ENCODE measurements at regions of chr10 and their contacts with region 1.

Region 1: DNA sequence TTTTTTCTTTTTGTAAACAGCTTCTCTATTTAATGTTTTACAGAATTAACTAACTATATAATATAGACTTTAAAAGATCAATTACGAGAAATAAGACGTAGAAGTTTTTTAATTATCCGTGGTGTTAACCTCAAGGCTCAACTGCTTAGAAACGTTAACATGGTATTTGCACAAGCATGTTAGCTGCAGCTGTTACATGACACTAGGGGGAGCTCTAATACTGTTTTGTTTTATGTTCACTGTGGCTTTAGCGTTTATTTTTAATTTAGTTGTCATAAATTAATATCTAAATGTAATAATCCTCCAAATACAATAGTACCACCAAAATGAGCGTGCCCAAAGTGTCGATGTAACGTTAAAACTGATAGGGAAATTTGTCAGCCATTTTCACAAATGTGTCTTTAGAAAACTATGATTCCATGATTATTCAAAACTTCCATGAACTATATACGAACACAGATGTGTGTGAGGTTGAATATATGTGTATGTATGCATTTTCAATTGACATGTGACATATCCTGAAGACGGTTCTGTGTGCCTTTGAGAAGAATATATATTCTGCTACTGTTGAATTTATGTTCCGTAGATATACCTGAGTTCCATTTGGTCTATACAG is 828.8 kb upstream of the MBL2 start:
- DNase-seq: peak; percentile 53
- H3K4me3 Mint-ChIP-seq: no peak overlapping the region
- H3K27ac Mint-ChIP-seq: peak overlapping the region; percentile 23
- H3K4me1 Mint-ChIP-seq: peaks cover 9% of the 10 kb centered on the region
- H3K27me3 Mint-ChIP-seq: no peaks in the 10 kb centered on the region
- CTCF ChIP-seq: peak; percentile 74

Region 2: DNA sequence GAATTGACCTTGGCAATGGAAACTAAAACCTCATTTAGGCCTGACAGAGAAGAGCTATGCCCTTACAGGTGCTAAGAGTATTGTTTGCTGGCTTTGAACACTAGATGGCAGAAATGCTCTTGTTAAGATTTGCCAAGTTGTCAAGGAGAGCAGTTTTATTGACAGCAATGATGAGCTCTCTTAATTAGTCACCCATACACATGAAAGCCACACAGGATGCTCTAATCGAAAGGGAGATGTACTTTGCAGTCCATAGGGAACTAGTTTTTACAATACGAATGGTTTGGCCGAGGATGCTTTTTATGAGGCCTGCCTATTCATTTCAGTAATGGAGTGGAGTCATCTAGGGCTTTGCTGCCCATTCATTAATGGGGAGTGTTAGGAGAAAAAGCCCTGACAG is 783.3 kb before region 1 on chr10:
- CTCF ChIA-PET with region 1: interaction called, 9 read pairs
- POLR2A ChIA-PET with region 1: interaction called, 3 read pairs
- intact Hi-C with region 1: loop called (anchors 5 kb)
- DNase-seq: peak; percentile 80
- H3K4me3 Mint-ChIP-seq: no peak overlapping the region
- H3K27ac Mint-ChIP-seq: no peak overlapping the region
- H3K4me1 Mint-ChIP-seq: peaks cover 6% of the 10 kb centered on the region
- H3K27me3 Mint-ChIP-seq: no peaks in the 10 kb centered on the region
- CTCF ChIP-seq: peak; percentile 44

Region 3: DNA sequence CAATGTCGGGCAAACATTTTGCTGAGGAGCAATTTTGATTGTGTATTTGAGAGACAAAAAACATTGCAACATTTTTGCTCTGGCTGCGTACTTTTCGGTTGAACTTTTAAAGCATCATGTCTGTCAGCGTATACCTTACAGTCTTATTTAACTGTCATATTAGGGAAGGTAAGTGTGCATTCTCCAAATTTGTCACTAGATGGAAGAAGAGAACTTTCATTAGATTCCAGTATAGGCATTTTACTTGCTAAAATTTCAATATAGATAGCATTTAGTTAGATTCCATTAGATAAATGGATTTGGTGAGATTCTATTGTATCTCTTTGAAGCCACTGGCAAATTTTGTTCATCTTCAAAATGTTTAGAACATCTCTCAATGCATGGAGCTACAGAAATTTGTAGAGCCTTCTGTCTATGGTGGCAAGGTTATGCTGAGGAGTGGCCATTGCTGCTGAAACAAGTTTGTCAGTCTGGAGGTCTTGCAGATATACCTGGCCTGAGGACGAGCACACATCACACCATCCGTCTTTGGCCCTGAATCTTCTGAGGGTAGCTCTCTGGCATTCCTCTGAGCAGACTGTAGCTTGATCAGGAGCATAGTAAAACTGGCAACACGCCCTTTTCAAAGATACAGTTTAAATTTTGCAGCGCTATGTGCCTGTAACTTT is 391.3 kb before region 1 on chr10:
- CTCF ChIA-PET with region 1: interaction called, 20 read pairs
- POLR2A ChIA-PET with region 1: interaction called, 4 read pairs
- intact Hi-C with region 1: loop called (anchors 2 kb)
- DNase-seq: peak; percentile 49
- H3K4me3 Mint-ChIP-seq: no peak overlapping the region
- H3K27ac Mint-ChIP-seq: no peak overlapping the region
- H3K4me1 Mint-ChIP-seq: no peaks in the 10 kb centered on the region
- H3K27me3 Mint-ChIP-seq: no peaks in the 10 kb centered on the region
- CTCF ChIP-seq: peak; percentile 45

Region 4: GRCh38 chr10:53548664-53549063 is 52.7 kb before region 1 on chr10:
- CTCF ChIA-PET with region 1: no interaction called
- POLR2A ChIA-PET with region 1: no interaction called
- intact Hi-C with region 1: no loop called
- DNase-seq: no peak
- H3K4me3 Mint-ChIP-seq: no peak overlapping the region
- H3K27ac Mint-ChIP-seq: no peak overlapping the region
- H3K4me1 Mint-ChIP-seq: no peaks in the 10 kb centered on the region
- H3K27me3 Mint-ChIP-seq: no peaks in the 10 kb centered on the region
- CTCF ChIP-seq: no peak

Region 5: DNA sequence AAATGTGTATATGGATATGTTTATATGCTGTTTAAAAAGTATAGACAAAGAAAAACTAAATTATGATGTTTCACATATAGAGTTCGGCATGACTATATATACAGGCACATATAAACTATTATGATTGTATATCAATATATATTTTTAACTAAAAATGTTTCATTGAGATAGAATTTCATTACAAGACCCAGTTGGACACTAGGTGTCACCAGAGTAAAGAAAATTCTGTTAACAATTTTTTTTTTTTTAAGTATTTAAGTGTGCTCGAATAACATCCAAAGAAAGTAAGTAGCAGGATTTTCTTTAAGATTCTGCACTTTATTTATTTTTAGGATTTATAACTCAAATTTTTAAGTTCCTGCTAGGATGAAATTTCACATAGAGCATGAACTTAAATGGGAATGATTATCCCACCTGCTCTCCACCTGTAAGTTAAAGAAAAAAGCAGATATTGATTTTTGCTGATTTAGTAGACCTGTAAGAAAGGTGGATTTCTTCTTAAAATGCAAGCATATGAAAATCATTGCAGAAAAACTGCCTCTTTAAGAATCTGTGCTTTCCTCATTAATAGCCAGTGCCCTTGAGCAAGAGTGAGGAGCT is 238.2 kb after region 1 on chr10:
- CTCF ChIA-PET with region 1: interaction called, 3 read pairs
- POLR2A ChIA-PET with region 1: no interaction called
- intact Hi-C with region 1: loop called (anchors 5 kb)
- DNase-seq: peak; percentile 47
- H3K4me3 Mint-ChIP-seq: no peak overlapping the region
- H3K27ac Mint-ChIP-seq: no peak overlapping the region
- H3K4me1 Mint-ChIP-seq: peaks cover 24% of the 10 kb centered on the region
- H3K27me3 Mint-ChIP-seq: no peaks in the 10 kb centered on the region
- CTCF ChIP-seq: peak; percentile 60

Region 6: GRCh38 chr10:54133203-54133602 is 531.8 kb after region 1 on chr10:
- CTCF ChIA-PET with region 1: interaction called, 4 read pairs
- POLR2A ChIA-PET with region 1: interaction called, 3 read pairs
- intact Hi-C with region 1: loop called (anchors 5 kb)
- DNase-seq: no peak
- H3K4me3 Mint-ChIP-seq: no peak overlapping the region
- H3K27ac Mint-ChIP-seq: no peak overlapping the region
- H3K4me1 Mint-ChIP-seq: no peaks in the 10 kb centered on the region
- H3K27me3 Mint-ChIP-seq: no peaks in the 10 kb centered on the region
- CTCF ChIP-seq: peak; percentile 35

Region 7: DNA sequence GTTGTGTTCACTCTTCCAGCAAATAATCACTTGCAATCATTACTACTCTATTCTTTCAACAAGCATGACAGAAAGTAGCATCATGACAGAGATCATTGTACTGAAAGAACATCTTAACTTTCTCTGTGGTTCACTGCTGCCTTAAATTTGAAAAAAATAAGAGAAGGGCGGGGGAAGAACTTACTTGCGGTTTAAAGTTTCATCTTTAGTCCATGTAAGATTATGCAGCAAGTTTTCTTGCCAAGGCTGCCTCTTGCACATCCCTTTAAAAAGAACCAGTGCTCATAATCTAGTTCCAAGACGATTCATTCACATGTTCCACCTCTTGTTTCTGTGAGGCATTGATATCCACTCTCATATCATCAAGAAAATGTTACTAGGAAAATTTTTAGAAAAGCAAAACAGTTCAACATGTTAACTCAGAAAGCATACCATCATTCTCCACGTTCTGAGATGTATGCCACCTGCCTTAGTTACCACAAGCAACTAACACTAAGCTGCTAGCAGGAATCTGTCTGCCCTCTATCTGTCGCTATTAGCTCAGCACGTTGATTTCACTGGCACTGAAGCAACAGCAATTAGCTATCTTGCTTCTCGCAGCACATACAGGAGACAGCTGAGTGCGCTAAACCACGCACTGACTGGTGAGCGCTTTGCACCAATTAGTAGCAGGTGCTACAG is 1199.5 kb after region 1 on chr10 and contains the start of gene PCDH15:
- CTCF ChIA-PET with region 1: no interaction called
- POLR2A ChIA-PET with region 1: no interaction called
- intact Hi-C with region 1: loop called (anchors 5 kb)
- DNase-seq: peak; percentile 46
- H3K4me3 Mint-ChIP-seq: no peak within 1 kb of the TSS
- H3K27ac Mint-ChIP-seq: no peak within 1 kb of the TSS
- H3K4me1 Mint-ChIP-seq: peaks cover 5% of the 10 kb centered on the region
- H3K27me3 Mint-ChIP-seq: peaks cover 49% of the 10 kb centered on the region
- CTCF ChIP-seq: peak; percentile 37
- total RNA-seq, gene PCDH15: not detected in 2 replicates

Measured in MCF 10A (cell line).